WTC11 (cell line): ENCODE measurements at regions of chr19 and their contacts with region 1.

Region 1: DNA sequence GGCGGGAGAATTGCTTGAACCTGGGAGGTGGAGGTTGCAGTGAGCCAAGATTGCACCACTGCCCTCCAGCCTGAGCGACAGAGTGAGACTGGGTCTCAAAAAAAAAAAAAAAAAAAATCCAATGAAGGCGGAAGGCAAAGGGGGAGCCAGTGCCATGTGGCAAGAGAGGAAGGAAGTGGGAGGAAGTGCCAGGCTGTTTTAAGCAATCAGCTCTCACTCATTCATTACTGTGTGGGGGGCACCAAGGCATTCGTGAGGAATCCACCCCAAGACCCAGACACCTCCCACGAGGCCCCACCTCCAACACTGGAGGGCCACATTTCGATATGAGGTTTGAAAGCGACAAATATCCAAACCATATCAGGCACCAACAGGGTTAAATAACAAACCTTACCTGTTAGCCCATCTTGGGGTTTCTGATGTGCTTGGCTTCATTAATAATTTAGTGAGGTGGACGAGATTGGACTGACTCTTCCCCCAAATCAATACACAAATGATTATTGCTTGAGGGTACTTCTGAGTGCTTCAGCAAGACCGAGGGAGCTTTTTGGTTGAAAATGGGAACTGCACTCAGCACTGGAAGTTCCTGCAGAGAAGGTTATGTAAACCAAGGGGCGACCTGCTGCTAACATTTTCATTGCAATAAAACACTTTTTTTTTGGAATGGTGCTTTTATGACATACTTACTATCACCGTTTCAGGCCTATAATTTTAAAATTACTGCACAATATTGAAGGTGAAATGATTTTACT is 7.5 kb upstream of the LRP3 start:
- DNase-seq: peak; percentile 1
- ATAC-seq: no peak
- H3K4me3 Mint-ChIP-seq: peak overlapping the region; percentile 47
- H3K27ac Mint-ChIP-seq: no peak overlapping the region
- H3K4me1 Mint-ChIP-seq: peaks cover 15% of the 10 kb centered on the region
- H3K27me3 Mint-ChIP-seq: peaks cover 9% of the 10 kb centered on the region
- CTCF ChIP-seq: no peak

Region 2: DNA sequence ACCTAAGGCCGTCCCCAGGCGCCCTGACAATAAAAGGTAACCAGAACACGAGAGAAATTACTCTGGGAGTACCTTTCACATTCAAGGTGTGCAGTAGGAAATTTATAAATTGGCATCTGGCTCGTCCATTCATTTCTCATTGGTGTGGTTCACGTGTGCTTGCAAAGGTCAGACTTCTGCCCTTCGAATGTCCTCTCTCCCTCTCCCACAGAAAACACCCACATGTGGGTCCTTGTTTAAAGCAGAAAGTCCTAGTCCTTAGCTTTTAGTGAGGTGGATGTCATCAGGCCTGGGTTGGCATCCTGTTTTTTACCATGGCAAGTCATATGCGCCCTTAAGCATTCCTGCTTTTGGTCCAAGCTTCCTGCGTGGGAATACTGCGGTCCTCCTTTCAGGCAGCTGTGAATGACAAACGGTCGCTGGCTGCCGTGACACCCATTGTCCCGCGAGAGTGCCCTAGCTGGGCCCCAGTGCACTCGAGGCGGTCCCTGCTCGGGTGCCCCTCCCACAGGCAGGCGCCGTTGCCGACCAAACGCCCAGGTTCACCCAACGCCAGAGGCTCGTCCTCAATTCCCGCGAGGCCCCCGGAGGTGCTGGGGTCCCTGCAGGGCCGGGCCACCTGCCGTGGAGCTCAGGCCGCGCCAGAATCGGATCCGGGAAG is 495.2 kb before region 1 on chr19 and contains the start of gene NUDT19:
- CTCF ChIA-PET with region 1: interaction called, 10 read pairs
- POLR2A ChIA-PET with region 1: no interaction called
- DNase-seq: peak; percentile 58
- ATAC-seq: peak; percentile 68
- H3K4me3 Mint-ChIP-seq: peak within 1 kb of the TSS; percentile 59
- H3K27ac Mint-ChIP-seq: no peak within 1 kb of the TSS
- H3K4me1 Mint-ChIP-seq: peaks cover 9% of the 10 kb centered on the region
- H3K27me3 Mint-ChIP-seq: peaks cover 33% of the 10 kb centered on the region
- CTCF ChIP-seq: no peak
- total RNA-seq, gene NUDT19: 2.4 to 3.0 TPM (median 2.7 TPM) in 3 replicates

Region 3: GRCh38 chr19:33125929-33126388 is 60.6 kb before region 1 on chr19:
- CTCF ChIA-PET with region 1: interaction called, 63 read pairs
- POLR2A ChIA-PET with region 1: no interaction called
- DNase-seq: peak; percentile 45
- ATAC-seq: peak; percentile 69
- H3K4me3 Mint-ChIP-seq: no peak overlapping the region
- H3K27ac Mint-ChIP-seq: no peak overlapping the region
- H3K4me1 Mint-ChIP-seq: no peaks in the 10 kb centered on the region
- H3K27me3 Mint-ChIP-seq: no peaks in the 10 kb centered on the region; the same call in 1 of the 2 replicates
- CTCF ChIP-seq: peak; percentile 71

Region 4: GRCh38 chr19:33143897-33144405 is 42.7 kb before region 1 on chr19:
- CTCF ChIA-PET with region 1: interaction called, 76 read pairs
- POLR2A ChIA-PET with region 1: interaction called, 3 read pairs
- DNase-seq: peak; percentile 75
- ATAC-seq: peak; percentile 95
- H3K4me3 Mint-ChIP-seq: no peak overlapping the region; the same call in 1 of the 2 replicates
- H3K27ac Mint-ChIP-seq: no peak overlapping the region
- H3K4me1 Mint-ChIP-seq: peaks cover 9% of the 10 kb centered on the region
- H3K27me3 Mint-ChIP-seq: no peaks in the 10 kb centered on the region; the same call in 1 of the 2 replicates
- CTCF ChIP-seq: peak; percentile 77

Region 5: GRCh38 chr19:33214596-33214995 is 28.0 kb after region 1 on chr19:
- CTCF ChIA-PET with region 1: interaction called, 12 read pairs
- POLR2A ChIA-PET with region 1: no interaction called
- DNase-seq: peak; percentile 65
- ATAC-seq: peak; percentile 76
- H3K4me3 Mint-ChIP-seq: no peak overlapping the region
- H3K27ac Mint-ChIP-seq: no peak overlapping the region; the same call in 1 of the 2 replicates
- H3K4me1 Mint-ChIP-seq: 0 out of 2 replicates have a peak, but pooled peaks cover 6% of the 10 kb centered on the region
- H3K27me3 Mint-ChIP-seq: no peaks in the 10 kb centered on the region
- CTCF ChIP-seq: no peak

Region 6: GRCh38 chr19:33235269-33235995 is 48.8 kb after region 1 on chr19:
- CTCF ChIA-PET with region 1: interaction called, 13 read pairs
- POLR2A ChIA-PET with region 1: no interaction called
- DNase-seq: peak; percentile 96
- ATAC-seq: peak; percentile 77
- H3K4me3 Mint-ChIP-seq: no peak overlapping the region
- H3K27ac Mint-ChIP-seq: no peak overlapping the region
- H3K4me1 Mint-ChIP-seq: peaks cover 2% of the 10 kb centered on the region; the same call in 1 of the 2 replicates
- H3K27me3 Mint-ChIP-seq: peaks cover 3% of the 10 kb centered on the region
- CTCF ChIP-seq: peak; percentile 86